ENCODE measurements at regions of chr7 and their contacts with region 1.

Region 1: DNA sequence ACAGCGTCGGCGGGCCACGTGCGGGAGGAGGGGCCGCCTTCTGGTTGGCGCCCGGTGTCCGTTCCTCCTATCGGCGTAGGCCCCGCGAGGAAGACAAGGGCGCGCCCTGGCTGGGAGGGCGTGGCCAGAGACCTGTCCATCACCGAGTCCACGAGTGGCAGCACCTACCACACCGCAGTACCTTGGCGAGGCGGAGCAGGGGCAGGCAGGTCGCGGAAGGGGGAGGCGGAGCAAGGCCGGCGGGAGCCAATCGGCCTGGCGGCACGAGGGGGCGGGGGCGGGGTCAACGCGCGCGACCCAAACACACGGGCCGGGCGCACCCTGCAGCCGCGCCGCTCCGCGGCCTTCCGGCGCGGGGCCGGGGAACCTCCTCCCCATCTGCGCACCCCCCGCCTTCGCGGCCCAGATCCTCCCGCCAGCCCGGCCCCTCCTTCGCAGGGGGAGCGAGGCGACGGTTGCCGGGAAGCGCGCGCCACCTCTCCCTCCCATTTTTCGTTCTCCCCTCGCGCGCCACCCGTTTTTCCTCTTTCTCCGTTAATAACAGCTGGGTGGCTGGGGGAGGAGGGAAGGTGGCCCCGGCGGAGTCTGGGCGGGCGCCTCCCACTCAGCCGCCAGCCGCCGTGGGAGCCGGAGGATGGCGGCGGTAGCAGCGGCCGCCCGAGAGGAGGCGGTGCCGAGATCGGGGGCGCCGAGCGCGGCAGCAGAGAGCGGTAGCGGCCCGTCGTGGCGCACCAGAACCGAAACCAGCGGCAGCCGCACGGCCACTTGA is at the start of gene ZNRF2:
- DNase-seq: peak; percentile 93 to 99 (median 98)
- ATAC-seq: peak; percentile 92
- H3K4me3 ChIP-seq: peak within 1 kb of the TSS; percentile 58
- H3K4me3 Mint-ChIP-seq: peak within 1 kb of the TSS; percentile 83 to 99 (median 86)
- H3K27ac ChIP-seq: peak within 1 kb of the TSS; percentile 83
- H3K27ac Mint-ChIP-seq: peak within 1 kb of the TSS; percentile 83 to 94 (median 92)
- H3K4me1 ChIP-seq: peaks cover 3 to 23% of the 10 kb centered on the region in 2 donors
- H3K4me1 Mint-ChIP-seq: peaks cover 33 to 49% (median 43%) of the 10 kb centered on the region in 7 donors
- H3K27me3 ChIP-seq: no peaks in the 10 kb centered on the region
- H3K27me3 Mint-ChIP-seq: peaks cover 0 to 2% (median 0%) of the 10 kb centered on the region in 5 donors
- total RNA-seq, gene ZNRF2: 13.7 to 28.0 (median 24.4) TPM

Region 2: DNA sequence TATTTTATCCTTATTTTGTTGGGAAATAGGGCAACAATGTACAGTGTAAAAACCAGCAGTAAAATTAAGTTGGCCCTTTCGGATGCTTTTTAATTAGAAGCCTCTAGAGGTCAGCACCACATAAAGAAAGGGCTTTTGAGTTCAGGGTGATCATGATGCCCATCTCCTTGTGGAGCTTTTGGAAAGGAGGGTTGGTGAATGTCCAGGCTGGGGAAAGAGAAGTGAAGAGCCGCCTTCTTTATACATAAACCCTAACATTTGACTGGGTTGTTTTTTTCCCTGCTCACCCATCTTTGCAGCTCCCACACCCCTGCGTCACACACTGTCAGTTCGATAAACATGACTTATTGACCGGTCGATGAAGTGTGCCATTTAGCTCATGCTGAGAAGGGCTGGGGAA is 119.9 kb before region 1 on chr7:
- CTCF ChIA-PET with region 1: no interaction called
- POLR2A ChIA-PET with region 1: no interaction called
- intact Hi-C with region 1: loop called (anchors 2 to 5 kb)
- DNase-seq: no peak
- ATAC-seq: peak; percentile 43
- H3K4me3 ChIP-seq: no peak overlapping the region
- H3K4me3 Mint-ChIP-seq: no peak overlapping the region
- H3K27ac ChIP-seq: no peak overlapping the region
- H3K27ac Mint-ChIP-seq: no peak overlapping the region
- H3K4me1 ChIP-seq: peaks cover 10 to 20% of the 10 kb centered on the region in 2 donors
- H3K4me1 Mint-ChIP-seq: peaks cover 25 to 44% (median 32%) of the 10 kb centered on the region in 7 donors
- H3K27me3 ChIP-seq: no peaks in the 10 kb centered on the region
- H3K27me3 Mint-ChIP-seq: peaks cover 0 to 3% (median 0%) of the 10 kb centered on the region in 5 donors

Region 3: GRCh38 chr7:30348083-30348560 is 63.6 kb after region 1 on chr7:
- CTCF ChIA-PET with region 1: interaction called, 58 read pairs
- POLR2A ChIA-PET with region 1: interaction called, 50 read pairs
- intact Hi-C with region 1: loop called (anchors 1 kb)
- DNase-seq: peak in 8 of 9 donors; percentile 42 to 81 (median 72)
- ATAC-seq: peak; percentile 92
- H3K4me3 ChIP-seq: no peak overlapping the region
- H3K4me3 Mint-ChIP-seq: peak overlapping the region; percentile 19 to 92 (median 58)
- H3K27ac ChIP-seq: no peak overlapping the region
- H3K27ac Mint-ChIP-seq: peak overlapping the region; percentile 81 to 98 (median 90)
- H3K4me1 ChIP-seq: peaks cover 18 to 25% of the 10 kb centered on the region in 2 donors
- H3K4me1 Mint-ChIP-seq: peaks cover 32 to 69% (median 46%) of the 10 kb centered on the region in 7 donors
- H3K27me3 ChIP-seq: no peaks in the 10 kb centered on the region
- H3K27me3 Mint-ChIP-seq: no peaks in the 10 kb centered on the region

Region 4: GRCh38 chr7:30403483-30403882 is 119.0 kb after region 1 on chr7:
- CTCF ChIA-PET with region 1: no interaction called
- POLR2A ChIA-PET with region 1: no interaction called
- intact Hi-C with region 1: no loop called
- DNase-seq: no peak
- ATAC-seq: no peak
- H3K4me3 ChIP-seq: no peak overlapping the region
- H3K4me3 Mint-ChIP-seq: no peak overlapping the region
- H3K27ac ChIP-seq: no peak overlapping the region
- H3K27ac Mint-ChIP-seq: no peak overlapping the region
- H3K4me1 ChIP-seq: no peaks in the 10 kb centered on the region
- H3K4me1 Mint-ChIP-seq: peaks cover 0 to 9% (median 0%) of the 10 kb centered on the region in 7 donors
- H3K27me3 ChIP-seq: no peaks in the 10 kb centered on the region
- H3K27me3 Mint-ChIP-seq: peaks cover 0 to 5% (median 0%) of the 10 kb centered on the region in 5 donors

Region 5: GRCh38 chr7:30478349-30479201 is 194.1 kb after region 1 on chr7 and contains the start of gene NOD1:
- CTCF ChIA-PET with region 1: no interaction called
- POLR2A ChIA-PET with region 1: interaction called, 6 read pairs
- intact Hi-C with region 1: loop called (anchors 1 kb)
- DNase-seq: peak; percentile 50 to 80 (median 65)
- ATAC-seq: peak; percentile 91
- H3K4me3 ChIP-seq: peak within 1 kb of the TSS; percentile 64
- H3K4me3 Mint-ChIP-seq: peak within 1 kb of the TSS in 9 of 10 donors; percentile 92 to 95 (median 94)
- H3K27ac ChIP-seq: peak within 1 kb of the TSS; percentile 80
- H3K27ac Mint-ChIP-seq: peak within 1 kb of the TSS in 6 of 9 donors; percentile 73 to 95 (median 90)
- H3K4me1 ChIP-seq: peaks cover 10 to 19% of the 10 kb centered on the region in 2 donors
- H3K4me1 Mint-ChIP-seq: peaks cover 22 to 54% (median 47%) of the 10 kb centered on the region in 7 donors
- H3K27me3 ChIP-seq: no peaks in the 10 kb centered on the region
- H3K27me3 Mint-ChIP-seq: no peaks in the 10 kb centered on the region
- total RNA-seq, gene NOD1: 17.3 to 24.6 (median 19.2) TPM

Region 6: DNA sequence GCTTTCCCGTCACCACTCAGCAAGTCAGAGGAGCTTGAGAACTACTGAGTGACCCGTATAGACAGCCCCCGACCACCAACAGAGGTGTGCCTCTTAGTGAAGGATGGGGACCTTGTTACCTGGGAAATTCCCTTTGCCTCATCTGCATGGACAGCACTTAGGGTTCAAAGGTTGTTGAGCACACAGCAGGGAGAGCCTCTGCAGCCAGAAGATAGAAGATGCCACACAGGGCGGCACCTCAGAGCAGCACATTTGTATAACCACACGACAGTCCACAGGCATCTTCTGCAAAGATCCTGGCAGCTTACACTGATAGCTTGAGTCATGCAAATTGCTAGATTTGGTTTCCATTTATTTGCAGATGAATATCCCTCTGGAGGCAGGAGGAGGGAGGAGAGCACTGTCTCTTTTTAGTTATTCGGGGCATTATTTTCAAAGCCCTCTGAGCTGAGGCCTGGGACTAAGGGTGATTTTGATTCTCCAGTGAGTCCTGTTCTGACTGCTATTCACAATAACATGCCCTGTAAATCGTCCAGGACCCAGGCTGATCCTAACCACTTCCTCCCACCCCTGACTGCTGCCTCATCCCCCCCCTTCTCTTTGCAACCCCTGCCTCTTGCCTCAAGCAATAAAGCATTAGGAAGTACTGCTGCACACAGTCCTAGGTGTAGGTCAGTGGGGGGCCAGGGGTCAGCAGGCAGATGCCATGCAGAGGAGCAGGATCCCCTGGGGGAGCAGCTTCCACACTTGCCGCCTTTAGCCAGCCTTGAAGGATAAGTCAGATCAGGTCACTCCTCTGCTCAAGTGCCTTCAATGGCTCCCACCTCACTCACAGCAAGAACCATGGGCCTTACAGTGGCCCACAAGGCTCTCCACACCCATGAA is 442.8 kb after region 1 on chr7:
- CTCF ChIA-PET with region 1: no interaction called
- POLR2A ChIA-PET with region 1: no interaction called
- intact Hi-C with region 1: loop called in 1 of 2 experiments (anchors 1 kb)
- DNase-seq: peak in 8 of 9 donors; percentile 30 to 86 (median 81)
- ATAC-seq: peak; percentile 93
- H3K4me3 ChIP-seq: peak overlapping the region; percentile 86
- H3K4me3 Mint-ChIP-seq: peak overlapping the region; percentile 76 to 91 (median 90)
- H3K27ac ChIP-seq: peak overlapping the region; percentile 67
- H3K27ac Mint-ChIP-seq: peak overlapping the region; percentile 86 to 96 (median 91)
- H3K4me1 ChIP-seq: peaks cover 24 to 52% of the 10 kb centered on the region in 2 donors
- H3K4me1 Mint-ChIP-seq: peaks cover 46 to 79% (median 77%) of the 10 kb centered on the region in 7 donors
- H3K27me3 ChIP-seq: no peaks in the 10 kb centered on the region
- H3K27me3 Mint-ChIP-seq: no peaks in the 10 kb centered on the region

Measured in naive thymus-derived CD4-positive, alpha-beta T cell (primary cell).